ENCODE measurements at regions of chr11 and their contacts with region 1.

Region 1: GRCh38 chr11:34105079-34105956 is at the start of gene NAT10:
- DNase-seq: peak; percentile 84 to 98 (median 96)
- ATAC-seq: peak; percentile 97
- H3K4me3 ChIP-seq: peak within 1 kb of the TSS; percentile 91
- H3K4me3 Mint-ChIP-seq: peak within 1 kb of the TSS; percentile 89 to 100 (median 97)
- H3K27ac ChIP-seq: peak within 1 kb of the TSS; percentile 83
- H3K27ac Mint-ChIP-seq: peak within 1 kb of the TSS; percentile 97 to 99 (median 99)
- H3K4me1 ChIP-seq: peaks cover 18 to 21% of the 10 kb centered on the region in 2 donors
- H3K4me1 Mint-ChIP-seq: peaks cover 26 to 76% (median 64%) of the 10 kb centered on the region in 7 donors
- H3K27me3 ChIP-seq: no peaks in the 10 kb centered on the region
- H3K27me3 Mint-ChIP-seq: peaks cover 0 to 5% (median 0%) of the 10 kb centered on the region in 5 donors
- total RNA-seq, gene NAT10: 55.7 to 104 (median 84.3) TPM

Region 2: GRCh38 chr11:33039274-33040032 is 1065.9 kb before region 1 on chr11 and contains the start of gene TCP11L1:
- CTCF ChIA-PET with region 1: no interaction called
- POLR2A ChIA-PET with region 1: no interaction called
- intact Hi-C with region 1: loop called in 1 of 2 experiments (anchors 1 kb)
- DNase-seq: peak; percentile 57 to 88 (median 76)
- ATAC-seq: peak; percentile 93
- H3K4me3 ChIP-seq: peak within 1 kb of the TSS; percentile 100
- H3K4me3 Mint-ChIP-seq: peak within 1 kb of the TSS; percentile 91 to 97 (median 94)
- H3K27ac ChIP-seq: peak within 1 kb of the TSS; percentile 82
- H3K27ac Mint-ChIP-seq: peak within 1 kb of the TSS; percentile 77 to 95 (median 92)
- H3K4me1 ChIP-seq: peaks cover 3 to 9% of the 10 kb centered on the region in 2 donors
- H3K4me1 Mint-ChIP-seq: peaks cover 0 to 17% (median 14%) of the 10 kb centered on the region in 7 donors
- H3K27me3 ChIP-seq: no peaks in the 10 kb centered on the region
- H3K27me3 Mint-ChIP-seq: peaks cover 0 to 17% (median 0%) of the 10 kb centered on the region in 5 donors
- total RNA-seq, gene TCP11L1: 9.1 to 17.1 (median 13.3) TPM

Region 3: GRCh38 chr11:33773987-33774735 is 331.2 kb before region 1 on chr11 and contains the start of gene FBXO3:
- CTCF ChIA-PET with region 1: no interaction called
- POLR2A ChIA-PET with region 1: interaction called, 7 read pairs
- intact Hi-C with region 1: loop called (anchors 1 kb)
- DNase-seq: peak; percentile 71 to 91 (median 88)
- ATAC-seq: peak; percentile 98
- H3K4me3 ChIP-seq: peak within 1 kb of the TSS; percentile 91
- H3K4me3 Mint-ChIP-seq: peak within 1 kb of the TSS; percentile 93 to 99 (median 97)
- H3K27ac ChIP-seq: peak within 1 kb of the TSS; percentile 83
- H3K27ac Mint-ChIP-seq: peak within 1 kb of the TSS; percentile 93 to 98 (median 96)
- H3K4me1 ChIP-seq: peaks cover 20 to 23% of the 10 kb centered on the region in 2 donors
- H3K4me1 Mint-ChIP-seq: peaks cover 33 to 58% (median 45%) of the 10 kb centered on the region in 7 donors
- H3K27me3 ChIP-seq: no peaks in the 10 kb centered on the region
- H3K27me3 Mint-ChIP-seq: peaks cover 0 to 34% (median 7%) of the 10 kb centered on the region in 5 donors
- total RNA-seq, gene FBXO3: 22.6 to 55.7 (median 47.7) TPM

Region 4: GRCh38 chr11:34086554-34087283 is 18.6 kb before region 1 on chr11:
- CTCF ChIA-PET with region 1: no interaction called
- POLR2A ChIA-PET with region 1: interaction called, 5 read pairs
- intact Hi-C with region 1: loop called in 1 of 2 experiments (anchors 1 kb)
- DNase-seq: peak in 2 of 9 donors; percentile 18 to 31
- ATAC-seq: peak; percentile 65
- H3K4me3 ChIP-seq: no peak overlapping the region
- H3K4me3 Mint-ChIP-seq: peak overlapping the region in 6 of 10 donors; percentile 5 to 35 (median 28)
- H3K27ac ChIP-seq: peak overlapping the region; percentile 31
- H3K27ac Mint-ChIP-seq: peak overlapping the region; percentile 32 to 91 (median 76)
- H3K4me1 ChIP-seq: peaks cover 0 to 3% of the 10 kb centered on the region in 2 donors
- H3K4me1 Mint-ChIP-seq: peaks cover 3 to 30% (median 18%) of the 10 kb centered on the region in 7 donors
- H3K27me3 ChIP-seq: no peaks in the 10 kb centered on the region
- H3K27me3 Mint-ChIP-seq: no peaks in the 10 kb centered on the region

Region 5: GRCh38 chr11:34243726-34244464 is 138.6 kb after region 1 on chr11:
- CTCF ChIA-PET with region 1: no interaction called
- POLR2A ChIA-PET with region 1: no interaction called
- intact Hi-C with region 1: loop called in 1 of 2 experiments (anchors 5 kb)
- DNase-seq: peak in 1 of 9 donors; percentile 54
- ATAC-seq: no peak
- H3K4me3 ChIP-seq: no peak overlapping the region
- H3K4me3 Mint-ChIP-seq: peak overlapping the region in 1 of 10 donors; percentile 53
- H3K27ac ChIP-seq: no peak overlapping the region
- H3K27ac Mint-ChIP-seq: peak overlapping the region in 2 of 9 donors; percentile 4 to 13
- H3K4me1 ChIP-seq: peaks cover 12 to 17% of the 10 kb centered on the region in 2 donors
- H3K4me1 Mint-ChIP-seq: peaks cover 16 to 77% (median 33%) of the 10 kb centered on the region in 7 donors
- H3K27me3 ChIP-seq: no peaks in the 10 kb centered on the region
- H3K27me3 Mint-ChIP-seq: peaks cover 0 to 10% (median 0%) of the 10 kb centered on the region in 5 donors

Region 6: DNA sequence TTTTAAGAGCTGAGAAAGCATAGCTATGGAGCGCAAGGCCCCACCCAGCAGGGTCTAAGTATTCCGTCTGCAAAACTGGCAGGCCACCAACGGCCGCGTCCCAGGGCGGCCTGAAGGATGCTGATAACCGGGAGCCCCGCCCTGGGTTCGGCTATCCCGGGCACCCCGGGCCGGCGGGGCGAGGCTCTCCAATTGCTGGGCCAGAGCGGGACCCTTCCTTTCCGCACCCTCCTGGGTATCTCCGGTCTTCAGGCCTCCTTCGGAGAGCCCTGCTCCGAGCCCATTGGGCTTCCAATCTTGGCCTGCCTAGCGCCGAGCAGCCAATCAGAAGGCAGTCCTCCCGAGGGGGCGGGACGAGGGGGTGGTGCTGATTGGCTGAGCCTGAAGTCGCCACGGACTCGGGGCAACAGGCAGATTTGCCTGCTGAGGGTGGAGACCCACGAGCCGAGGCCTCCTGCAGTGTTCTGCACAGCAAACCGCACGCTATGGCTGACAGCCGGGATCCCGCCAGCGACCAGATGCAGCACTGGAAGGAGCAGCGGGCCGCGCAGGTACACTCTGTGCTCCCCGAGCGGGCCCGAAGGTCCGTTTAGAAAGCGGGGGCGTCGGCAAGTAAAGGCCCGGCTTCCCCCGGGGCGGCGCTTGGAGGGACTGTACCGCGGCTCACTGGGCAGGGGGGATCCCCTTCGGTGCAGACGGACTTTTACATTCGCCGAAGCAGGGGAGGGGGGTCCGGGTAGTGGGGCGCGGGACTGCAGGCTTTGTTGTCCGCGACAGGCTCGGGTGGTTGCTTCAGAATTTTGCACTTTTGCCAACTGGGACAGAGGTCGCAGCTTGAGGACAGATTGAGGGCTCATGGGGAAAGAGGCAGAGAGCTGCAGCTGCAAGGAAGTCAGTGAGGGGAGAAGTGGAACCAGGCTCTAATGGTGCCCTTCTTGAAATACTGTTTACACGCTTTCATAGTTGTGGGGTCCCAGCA is 333.5 kb after region 1 on chr11 and contains the start of gene CAT:
- CTCF ChIA-PET with region 1: no interaction called
- POLR2A ChIA-PET with region 1: interaction called, 5 read pairs
- intact Hi-C with region 1: loop called (anchors 1 kb)
- DNase-seq: peak; percentile 94 to 98 (median 97)
- ATAC-seq: peak; percentile 98
- H3K4me3 ChIP-seq: peak within 1 kb of the TSS; percentile 90
- H3K4me3 Mint-ChIP-seq: peak within 1 kb of the TSS; percentile 88 to 98 (median 96)
- H3K27ac ChIP-seq: peak within 1 kb of the TSS; percentile 79
- H3K27ac Mint-ChIP-seq: peak within 1 kb of the TSS; percentile 89 to 97 (median 93)
- H3K4me1 ChIP-seq: peaks cover 7 to 19% of the 10 kb centered on the region in 2 donors
- H3K4me1 Mint-ChIP-seq: peaks cover 21 to 47% (median 35%) of the 10 kb centered on the region in 7 donors
- H3K27me3 ChIP-seq: no peaks in the 10 kb centered on the region
- H3K27me3 Mint-ChIP-seq: no peaks in the 10 kb centered on the region
- total RNA-seq, gene CAT: 23.3 to 55.9 (median 42.6) TPM

Measured in naive thymus-derived CD4-positive, alpha-beta T cell (primary cell).